AG04449 (cell line): ENCODE measurements at regions of chr4 and their contacts with region 1.

Region 1: GRCh38 chr4:48141048-48141447 is 7.0 kb upstream of the TXK start:
- DNase-seq: no peak
- H3K4me3 ChIP-seq: no peak overlapping the region
- CTCF ChIP-seq: peak; percentile 33

Region 2: GRCh38 chr4:48002267-48002666 is 138.8 kb before region 1 on chr4:
- CTCF ChIA-PET with region 1: interaction called, 10 read pairs
- POLR2A ChIA-PET with region 1: no interaction called
- DNase-seq: no peak
- H3K4me3 ChIP-seq: no peak overlapping the region
- CTCF ChIP-seq: no peak

Region 3: DNA sequence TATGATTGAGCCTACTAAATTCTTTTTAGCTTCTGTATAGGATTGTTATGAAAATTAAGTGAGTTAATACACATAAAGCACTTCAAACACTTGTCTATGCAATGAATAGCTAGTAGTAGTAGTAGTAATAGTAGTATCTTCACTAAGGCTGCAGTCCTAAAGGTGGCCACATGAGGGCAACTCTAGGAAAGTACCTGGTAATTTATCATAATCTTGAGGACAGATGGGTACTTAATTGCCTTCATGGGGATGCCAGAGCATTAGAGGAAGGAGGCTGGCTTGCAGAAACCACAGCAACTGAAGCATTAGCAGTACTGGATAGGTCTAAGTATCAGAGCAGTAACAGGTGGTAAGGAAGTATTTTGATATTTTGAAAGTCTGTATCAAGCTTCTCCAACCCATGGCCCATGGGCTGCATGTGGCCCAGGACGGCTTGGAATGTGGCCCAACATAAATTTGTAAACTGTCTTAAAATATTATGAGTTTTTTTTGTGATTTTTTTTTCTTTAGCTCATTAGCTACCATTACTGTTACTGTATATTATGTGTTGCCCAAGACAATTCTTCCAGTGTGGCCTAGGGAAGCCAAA is 107.1 kb before region 1 on chr4:
- CTCF ChIA-PET with region 1: interaction called, 22 read pairs
- POLR2A ChIA-PET with region 1: no interaction called
- DNase-seq: no peak
- H3K4me3 ChIP-seq: no peak overlapping the region
- CTCF ChIP-seq: peak; percentile 30

Region 4: DNA sequence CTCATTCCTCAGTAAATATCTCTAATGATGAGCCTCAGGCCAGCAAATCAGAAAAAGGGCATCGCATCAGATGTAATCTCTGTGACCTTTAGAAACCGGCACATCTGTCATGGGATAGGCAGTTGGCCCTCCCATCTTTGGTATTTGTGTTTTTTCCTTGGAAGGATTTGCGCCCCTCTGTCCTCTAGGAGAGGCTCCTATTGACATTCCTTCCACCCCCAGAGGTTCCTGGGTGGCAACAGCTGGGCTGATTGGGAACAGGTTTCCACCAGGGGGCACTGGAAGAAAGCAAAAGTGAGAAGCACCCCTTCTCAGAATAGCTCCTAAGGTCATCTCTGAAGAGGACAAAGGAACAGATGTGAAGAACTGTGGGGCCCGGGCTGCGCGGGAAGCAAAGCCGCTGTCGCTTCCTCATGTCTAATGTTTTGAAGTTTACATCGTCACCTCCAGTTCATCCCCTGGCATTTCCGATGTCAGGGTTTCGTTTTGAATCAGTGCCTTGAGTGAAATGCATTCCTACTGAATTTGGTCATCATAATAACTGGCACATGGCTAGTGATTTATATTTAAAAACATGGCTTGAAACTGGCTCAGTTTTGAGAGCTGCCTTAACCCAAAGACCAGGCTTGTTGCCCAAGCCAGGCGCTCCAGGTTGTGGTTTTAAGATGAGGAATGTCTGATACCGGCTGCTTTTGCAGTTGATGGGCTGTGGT is 13.2 kb before region 1 on chr4:
- CTCF ChIA-PET with region 1: interaction called, 71 read pairs
- POLR2A ChIA-PET with region 1: interaction called, 3 read pairs
- DNase-seq: peak; percentile 92
- H3K4me3 ChIP-seq: peak overlapping the region; percentile 34
- CTCF ChIP-seq: peak; percentile 37

Region 5: DNA sequence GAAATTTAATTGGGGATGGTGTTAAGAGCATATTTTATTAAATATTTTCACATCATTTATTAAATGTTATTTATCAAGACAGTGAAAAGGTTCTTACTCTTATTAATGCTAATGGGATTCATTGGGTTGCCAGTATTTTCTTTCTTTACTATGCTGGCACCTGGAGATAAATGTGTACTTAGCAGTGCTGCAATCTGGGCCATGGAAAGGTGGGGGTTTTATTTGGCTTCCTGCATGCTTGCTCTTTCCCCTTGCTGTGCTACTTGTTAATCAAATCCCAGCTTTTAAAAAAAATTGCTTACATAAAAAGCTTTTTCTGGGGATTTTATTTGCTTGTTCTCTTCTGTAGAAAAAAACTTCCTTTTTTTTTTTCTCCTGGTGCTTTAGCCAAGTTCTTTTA is 397.3 kb after region 1 on chr4:
- CTCF ChIA-PET with region 1: no interaction called
- POLR2A ChIA-PET with region 1: no interaction called
- DNase-seq: no peak
- H3K4me3 ChIP-seq: no peak overlapping the region
- CTCF ChIP-seq: no peak